Activated naive CD4-positive, alpha-beta T cell treated with anti-CD3 and anti-CD28 coated beads for 36 hours (primary cell): ENCODE measurements at regions of chr2 and their contacts with region 1.

Region 1: DNA sequence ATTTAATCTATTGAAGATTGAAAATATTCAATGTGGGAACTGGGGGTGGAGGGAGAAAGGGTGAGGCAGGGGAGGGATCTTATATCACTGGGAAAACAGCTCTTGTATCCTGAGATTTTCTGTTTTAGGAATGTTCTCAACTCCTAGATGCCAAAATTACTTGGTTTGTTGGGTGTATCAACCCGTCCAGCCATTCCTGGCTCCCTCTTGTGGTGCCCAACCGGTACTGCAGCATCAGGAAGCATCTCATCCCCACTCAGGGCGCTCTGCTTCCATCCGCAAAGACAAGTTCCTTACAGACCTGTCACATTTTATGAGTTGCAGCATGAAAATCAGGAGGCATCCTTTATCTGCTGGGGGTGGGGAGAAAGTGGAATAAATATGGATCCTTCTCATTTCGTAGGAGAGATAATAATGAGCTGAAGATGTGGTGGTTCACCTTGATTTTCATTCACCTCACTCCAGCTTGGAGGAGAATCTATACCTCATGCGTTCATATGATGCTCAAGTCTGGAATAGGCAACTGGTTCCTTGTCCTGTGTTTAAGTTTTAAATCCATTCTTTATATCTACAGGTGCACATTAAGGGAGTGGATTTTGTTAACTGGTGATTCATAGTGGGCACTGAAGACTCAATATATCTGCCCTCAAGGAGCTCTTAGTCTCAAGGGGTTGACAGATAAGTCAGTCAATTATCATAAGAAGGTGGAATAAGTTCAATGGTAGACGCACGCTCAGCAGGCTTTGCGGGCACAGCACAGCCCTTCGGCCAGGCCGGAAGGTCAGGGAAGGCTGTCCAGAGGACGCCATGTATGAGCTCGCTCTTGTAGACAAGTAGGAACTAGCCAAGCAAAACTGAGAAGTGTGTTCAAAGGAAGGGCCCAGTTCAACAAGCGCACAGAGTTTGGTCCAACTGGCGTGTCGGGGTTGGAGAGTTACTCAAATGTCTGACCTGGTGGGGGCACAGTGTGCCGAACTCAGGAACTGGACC is 127.3 kb downstream of the RNF144A start:
- DNase-seq: peak; percentile 71
- H3K4me3 Mint-ChIP-seq: no peak overlapping the region
- H3K27ac Mint-ChIP-seq: no peak overlapping the region
- H3K4me1 Mint-ChIP-seq: peaks cover 18% of the 10 kb centered on the region
- H3K27me3 Mint-ChIP-seq: no peaks in the 10 kb centered on the region

Region 2: GRCh38 chr2:6872394-6872793 is 172.2 kb before region 1 on chr2:
- CTCF ChIA-PET with region 1: interaction called, 13 read pairs
- intact Hi-C with region 1: no loop called
- DNase-seq: no peak
- H3K4me3 Mint-ChIP-seq: peak overlapping the region; percentile 34
- H3K27ac Mint-ChIP-seq: peak overlapping the region; percentile 37
- H3K4me1 Mint-ChIP-seq: peaks cover 39% of the 10 kb centered on the region
- H3K27me3 Mint-ChIP-seq: no peaks in the 10 kb centered on the region

Region 3: DNA sequence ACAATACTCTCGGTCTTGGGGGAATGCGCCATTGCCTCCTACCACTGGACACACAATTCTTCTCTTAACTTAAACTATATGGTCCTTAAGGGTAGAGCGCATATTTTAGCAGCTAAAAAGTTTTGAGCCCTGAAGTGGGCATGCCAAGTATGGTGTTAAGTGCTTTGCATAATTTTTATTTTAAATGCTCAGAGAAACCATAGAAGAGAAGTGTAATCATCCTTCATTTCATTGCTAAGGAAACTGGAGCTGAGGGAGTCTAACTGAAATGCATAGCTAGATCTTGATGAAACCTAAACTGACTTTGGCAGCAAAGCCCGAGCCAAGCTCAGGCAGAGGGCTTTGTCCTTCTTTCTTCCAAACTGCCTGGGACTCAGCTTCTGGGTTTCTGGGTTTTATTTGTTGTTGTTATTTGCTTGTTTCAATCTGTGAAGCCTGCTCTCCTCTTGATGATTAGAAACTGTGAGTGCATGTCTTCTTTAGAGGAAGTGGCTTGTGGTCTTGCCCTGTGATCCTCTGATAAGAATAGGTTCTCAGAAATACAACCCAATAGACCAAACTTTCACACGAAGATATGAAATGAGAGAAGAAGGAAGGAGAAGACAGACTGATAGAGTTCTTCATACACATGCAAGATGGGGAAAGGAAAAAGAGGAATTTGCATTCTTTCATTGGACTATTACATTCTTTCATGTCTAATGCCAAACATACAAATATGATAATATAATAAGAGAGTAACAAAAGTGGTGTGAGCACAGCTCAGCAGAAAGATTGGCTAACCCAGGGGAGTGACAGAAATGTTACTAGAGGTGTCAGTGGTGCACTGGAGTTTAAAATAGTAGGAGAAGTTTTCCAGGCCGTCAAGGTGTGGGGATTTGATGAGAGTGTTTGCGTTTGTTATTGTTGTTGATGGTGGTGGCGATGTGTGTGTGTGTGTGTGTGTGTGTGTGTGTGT is 134.8 kb before region 1 on chr2:
- CTCF ChIA-PET with region 1: interaction called, 20 read pairs
- intact Hi-C with region 1: no loop called
- DNase-seq: peak; percentile 64
- H3K4me3 Mint-ChIP-seq: peak overlapping the region; percentile 65
- H3K27ac Mint-ChIP-seq: peak overlapping the region; percentile 100
- H3K4me1 Mint-ChIP-seq: peaks cover 89% of the 10 kb centered on the region
- H3K27me3 Mint-ChIP-seq: no peaks in the 10 kb centered on the region

Region 4: DNA sequence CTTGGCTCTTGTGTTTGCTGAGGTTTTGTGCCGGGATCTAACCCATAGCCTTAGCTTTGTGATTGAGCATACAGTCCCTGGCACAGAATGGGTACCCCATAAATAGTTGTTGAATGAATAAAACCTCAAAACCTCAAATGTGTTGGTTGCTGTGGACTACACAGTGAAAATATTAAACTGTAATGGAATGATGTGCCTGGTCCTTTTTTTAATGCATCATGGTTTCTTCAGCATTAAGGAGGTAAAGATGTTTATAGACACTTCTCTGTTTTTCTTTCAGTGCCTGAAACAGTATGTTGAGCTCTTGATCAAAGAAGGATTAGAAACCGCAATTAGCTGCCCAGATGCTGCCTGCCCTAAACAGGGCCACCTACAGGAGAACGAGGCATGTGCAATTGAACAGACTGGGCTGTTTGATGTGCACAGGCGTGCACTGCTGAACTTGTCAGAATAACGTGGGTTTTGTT is 30.3 kb before region 1 on chr2:
- CTCF ChIA-PET with region 1: interaction called, 11 read pairs
- intact Hi-C with region 1: no loop called
- DNase-seq: peak; percentile 42
- H3K4me3 Mint-ChIP-seq: no peak overlapping the region
- H3K27ac Mint-ChIP-seq: peak overlapping the region; percentile 44
- H3K4me1 Mint-ChIP-seq: peaks cover 41% of the 10 kb centered on the region
- H3K27me3 Mint-ChIP-seq: no peaks in the 10 kb centered on the region

Region 5: DNA sequence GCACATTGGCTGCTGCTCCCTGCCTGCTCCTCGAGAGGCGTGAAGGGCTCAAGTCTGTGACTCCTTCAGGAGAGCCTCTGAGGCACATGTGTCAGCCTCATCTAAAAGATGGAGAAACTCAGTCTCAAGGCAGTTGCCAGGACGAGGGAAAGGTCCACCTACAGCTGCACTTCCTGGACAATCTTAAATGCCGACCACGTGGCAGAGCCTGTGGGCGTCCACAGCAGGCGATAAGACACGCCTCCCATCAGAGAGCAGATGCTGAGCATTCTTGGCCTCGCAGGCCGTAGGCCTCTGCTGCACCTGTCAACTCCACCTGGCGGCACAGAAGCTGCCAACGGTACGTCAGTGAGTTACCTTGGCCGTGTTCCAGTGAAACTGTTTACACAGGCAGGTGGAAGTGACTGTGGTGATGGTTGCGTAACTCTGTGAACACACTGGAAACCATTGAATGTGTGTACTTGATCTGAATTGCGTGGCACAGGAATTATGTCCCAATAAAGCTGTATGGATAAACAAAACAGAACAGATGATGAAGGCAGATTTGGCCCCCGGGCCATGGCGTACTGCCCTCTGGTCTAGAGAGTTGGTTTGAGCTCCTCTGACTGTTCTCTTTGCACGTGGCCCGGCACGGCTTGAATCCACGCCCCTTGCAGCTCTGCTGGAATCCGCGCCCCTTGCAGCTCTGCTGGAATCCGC is 12.9 kb before region 1 on chr2:
- CTCF ChIA-PET with region 1: interaction called, 32 read pairs
- intact Hi-C with region 1: no loop called
- DNase-seq: peak; percentile 46
- H3K4me3 Mint-ChIP-seq: no peak overlapping the region
- H3K27ac Mint-ChIP-seq: peak overlapping the region; percentile 57
- H3K4me1 Mint-ChIP-seq: peaks cover 6% of the 10 kb centered on the region
- H3K27me3 Mint-ChIP-seq: no peaks in the 10 kb centered on the region

Region 6: GRCh38 chr2:7071154-7071553 is 26.6 kb after region 1 on chr2:
- CTCF ChIA-PET with region 1: interaction called, 11 read pairs
- intact Hi-C with region 1: no loop called
- DNase-seq: no peak
- H3K4me3 Mint-ChIP-seq: no peak overlapping the region
- H3K27ac Mint-ChIP-seq: no peak overlapping the region
- H3K4me1 Mint-ChIP-seq: peaks cover 4% of the 10 kb centered on the region
- H3K27me3 Mint-ChIP-seq: no peaks in the 10 kb centered on the region